ENCODE measurements at regions of chr2 and their contacts with region 1.

Region 1: DNA sequence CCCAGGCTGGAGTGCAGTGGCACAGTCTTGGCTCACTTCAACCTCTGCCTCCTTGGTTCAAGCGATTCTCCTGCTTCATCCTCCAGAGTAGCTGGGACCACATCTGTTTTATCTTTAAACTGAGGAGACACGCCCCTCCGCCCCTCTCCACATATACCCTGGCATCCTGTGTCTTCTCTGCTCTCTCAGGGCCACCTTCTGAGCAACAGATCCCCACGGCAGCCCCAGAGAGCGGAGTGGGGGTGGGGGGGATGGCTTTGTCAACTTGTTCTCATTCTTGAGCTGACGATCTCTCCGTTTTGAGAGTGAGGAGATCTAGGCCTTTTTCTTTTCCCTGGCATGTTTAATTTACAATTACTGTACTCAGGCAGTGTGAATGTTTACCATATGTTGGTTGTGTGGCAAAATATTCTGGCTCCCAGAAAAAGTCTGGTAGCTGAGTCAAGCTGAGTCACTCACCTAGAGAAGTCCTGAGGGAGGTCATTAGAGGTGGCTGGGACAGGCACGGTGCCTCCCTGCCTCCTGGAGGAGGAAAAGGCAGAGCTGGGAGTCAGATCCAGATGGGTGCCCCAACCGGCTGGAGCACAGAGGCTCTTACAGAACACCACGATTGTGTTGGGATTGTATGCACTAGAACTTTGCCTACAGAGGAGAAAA is 19.5 kb upstream of the ID2 start:
- DNase-seq: peak in 5 of 7 donors; percentile 36 to 63 (median 60)
- H3K4me3 ChIP-seq: no peak overlapping the region
- H3K27ac ChIP-seq: no peak overlapping the region
- H3K4me1 ChIP-seq: peaks cover 12 to 23% of the 10 kb centered on the region in 2 donors
- H3K27me3 ChIP-seq: no peaks in the 10 kb centered on the region
- CTCF ChIP-seq: peak in 1 of 6 experiments; percentile 19
- POLR2A ChIP-seq: no peak

Region 2: GRCh38 chr2:8525582-8526402 is 136.6 kb before region 1 on chr2:
- intact Hi-C with region 1: loop called in 1 of 2 experiments (anchors 10 kb)
- DNase-seq: peak; percentile 60 to 88 (median 80)
- H3K4me3 ChIP-seq: no peak overlapping the region
- H3K27ac ChIP-seq: peak overlapping the region in 2 of 5 donors; percentile 34 to 64
- H3K4me1 ChIP-seq: peaks cover 0 to 19% of the 10 kb centered on the region in 2 donors
- H3K27me3 ChIP-seq: no peaks in the 10 kb centered on the region
- CTCF ChIP-seq: peak in 4 of 6 experiments; percentile 15 to 43 (median 34)
- POLR2A ChIP-seq: no peak

Measured in adrenal gland (tissue), 19 donors.